ENCODE measurements at regions of chr1 and their contacts with region 1.

Region 1: DNA sequence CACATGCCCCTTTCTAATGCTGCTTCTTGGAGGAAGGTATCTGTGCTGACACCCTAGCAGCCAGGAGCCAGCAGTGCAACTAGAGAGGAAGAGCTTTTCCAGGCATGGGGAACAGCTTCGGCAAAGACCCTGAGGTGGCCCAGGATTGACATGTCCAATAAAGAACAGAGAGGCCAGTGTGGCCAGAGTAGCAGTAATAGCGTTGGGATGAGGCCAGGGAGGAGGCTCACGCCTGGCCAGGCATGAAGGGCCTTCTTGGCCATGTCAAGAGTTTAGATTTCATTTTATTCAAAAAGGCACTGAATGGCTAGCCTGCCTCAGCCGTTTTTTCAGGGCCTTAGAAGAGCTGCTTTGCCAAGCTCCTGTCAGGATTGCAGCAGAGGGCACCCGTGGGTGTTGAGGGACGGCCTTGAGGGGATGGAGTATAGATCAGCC is 16.3 kb upstream of the ADAMTSL4 start:
- DNase-seq: no peak
- H3K4me3 Mint-ChIP-seq: no peak overlapping the region
- H3K27ac Mint-ChIP-seq: peak overlapping the region; percentile 9
- H3K4me1 Mint-ChIP-seq: peaks cover 4% of the 10 kb centered on the region
- H3K27me3 Mint-ChIP-seq: no peaks in the 10 kb centered on the region

Region 2: GRCh38 chr1:150515328-150516048 is 17.4 kb before region 1 on chr1 and contains the start of gene FALEC:
- CTCF ChIA-PET with region 1: interaction called, 16 read pairs
- POLR2A ChIA-PET with region 1: no interaction called
- DNase-seq: peak; percentile 91
- H3K4me3 Mint-ChIP-seq: peak within 1 kb of the TSS; percentile 81
- H3K27ac Mint-ChIP-seq: peak within 1 kb of the TSS; percentile 68
- H3K4me1 Mint-ChIP-seq: peaks cover 19% of the 10 kb centered on the region
- H3K27me3 Mint-ChIP-seq: no peaks in the 10 kb centered on the region
- total RNA-seq, gene FALEC: 0.64 TPM in 1 of 2 experiments, not detected in the other

Region 3: DNA sequence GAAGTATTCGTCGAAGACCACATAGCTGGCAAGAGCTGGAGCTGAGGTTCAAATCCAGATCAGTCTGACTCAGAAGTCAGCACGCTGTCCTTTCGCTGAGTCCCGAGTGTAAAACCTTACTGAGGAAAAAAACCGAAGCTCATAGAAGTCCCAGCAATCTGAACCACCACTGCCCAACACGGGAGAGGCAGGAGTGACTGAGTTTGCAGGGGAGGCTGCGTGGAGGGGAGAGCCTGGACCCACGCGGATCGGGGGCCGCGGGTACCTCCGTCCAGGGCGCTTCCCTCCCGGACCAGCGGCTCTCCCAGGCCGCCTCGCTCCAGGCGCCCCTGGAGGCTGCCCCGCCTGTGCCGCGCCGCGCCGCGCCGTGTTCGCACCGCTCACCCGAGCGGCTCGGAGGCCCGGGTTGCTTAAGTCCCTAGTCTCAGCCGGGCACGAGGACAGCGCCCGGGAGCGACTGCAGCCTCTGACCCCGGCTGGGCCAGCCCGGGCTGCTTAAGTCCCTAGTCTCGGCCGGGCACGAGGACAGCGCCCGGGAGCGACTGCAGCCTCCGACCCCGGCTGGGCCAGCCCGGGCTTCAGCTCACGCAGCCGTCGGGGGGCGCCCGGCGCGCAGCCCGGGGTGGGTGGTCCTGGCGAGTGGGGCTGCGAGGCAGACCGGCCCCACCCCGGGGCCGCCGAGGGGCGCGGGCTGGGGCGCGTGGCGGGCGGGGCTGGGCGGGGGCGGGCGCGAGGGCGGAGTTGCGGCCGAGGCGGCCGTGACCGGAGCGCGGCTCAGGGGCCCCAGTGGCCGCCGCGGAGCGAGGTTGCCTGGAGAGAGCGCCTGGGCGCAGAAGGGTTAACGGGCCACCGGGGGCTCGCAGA is 16.0 kb after region 1 on chr1 and contains the start of gene ADAMTSL4:
- CTCF ChIA-PET with region 1: interaction called, 11 read pairs
- POLR2A ChIA-PET with region 1: no interaction called
- DNase-seq: peak; percentile 40
- H3K4me3 Mint-ChIP-seq: peak within 1 kb of the TSS; percentile 68
- H3K27ac Mint-ChIP-seq: peak within 1 kb of the TSS; percentile 50
- H3K4me1 Mint-ChIP-seq: peaks cover 30% of the 10 kb centered on the region
- H3K27me3 Mint-ChIP-seq: peaks cover 30% of the 10 kb centered on the region
- total RNA-seq, gene ADAMTSL4: 0.06 to 0.15 TPM

Measured in activated CD4-positive, alpha-beta T cell treated with anti-CD3 and anti-CD28 coated beads, Interleukin-2, amount 10 ng/mL, durations not matched to agents 7 days and 5 days (primary cell).